Mammary epithelial cell (primary cell): ENCODE measurements at regions of chr15 and their contacts with region 1.

Region 1: DNA sequence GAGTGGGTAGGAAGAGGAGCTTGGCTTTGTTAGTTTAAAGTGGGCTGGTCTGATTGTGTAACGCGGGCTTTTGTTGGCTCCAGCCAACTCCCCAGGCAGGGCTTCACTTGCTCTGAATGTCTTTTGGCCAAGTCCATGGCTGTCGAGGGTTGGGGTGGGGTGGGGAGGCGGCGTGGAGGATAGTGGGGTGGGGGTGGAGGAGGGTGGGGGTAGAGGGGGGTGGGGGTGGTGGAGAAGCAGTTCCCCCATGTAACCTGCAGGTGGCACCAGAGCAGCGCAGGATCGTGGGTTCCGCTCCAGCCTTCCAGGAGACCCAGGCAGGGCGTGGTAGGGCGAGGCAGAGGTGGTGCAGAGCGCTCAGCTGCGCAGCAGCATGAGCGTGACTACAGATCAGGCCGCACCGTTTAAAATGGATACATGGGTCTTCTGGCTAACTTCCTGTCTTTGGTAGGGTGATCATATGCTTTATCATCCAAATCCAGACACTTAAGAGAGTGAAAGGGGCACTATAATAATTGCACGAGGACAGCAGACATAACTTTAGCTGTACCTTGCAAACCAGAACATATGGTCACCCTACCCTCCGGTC is 28.3 kb downstream of the GOLGA6A start:
- DNase-seq: peak; percentile 47
- H3K4me3 ChIP-seq: no peak overlapping the region
- H3K27ac ChIP-seq: no peak overlapping the region
- H3K4me1 ChIP-seq: peaks cover 24% of the 10 kb centered on the region
- H3K27me3 ChIP-seq: no peaks in the 10 kb centered on the region
- CTCF ChIP-seq: peak; percentile 36 to 77

Region 2: GRCh38 chr15:73991726-73992593 is 62.1 kb before region 1 on chr15 and contains the start of gene STOML1:
- CTCF ChIA-PET with region 1: no interaction called
- dilution Hi-C with region 1: no loop called
- in situ Hi-C with region 1: no loop called
- intact Hi-C with region 1: no loop called
- DNase-seq: peak; percentile 92
- H3K4me3 ChIP-seq: peak within 1 kb of the TSS; percentile 59 to 78 (median 68)
- H3K27ac ChIP-seq: peak within 1 kb of the TSS; percentile 35
- H3K4me1 ChIP-seq: peaks cover 61% of the 10 kb centered on the region
- H3K27me3 ChIP-seq: no peaks in the 10 kb centered on the region
- CTCF ChIP-seq: peak; percentile 64 to 80
- total RNA-seq, gene STOML1: 14.0 to 15.3 TPM

Region 3: DNA sequence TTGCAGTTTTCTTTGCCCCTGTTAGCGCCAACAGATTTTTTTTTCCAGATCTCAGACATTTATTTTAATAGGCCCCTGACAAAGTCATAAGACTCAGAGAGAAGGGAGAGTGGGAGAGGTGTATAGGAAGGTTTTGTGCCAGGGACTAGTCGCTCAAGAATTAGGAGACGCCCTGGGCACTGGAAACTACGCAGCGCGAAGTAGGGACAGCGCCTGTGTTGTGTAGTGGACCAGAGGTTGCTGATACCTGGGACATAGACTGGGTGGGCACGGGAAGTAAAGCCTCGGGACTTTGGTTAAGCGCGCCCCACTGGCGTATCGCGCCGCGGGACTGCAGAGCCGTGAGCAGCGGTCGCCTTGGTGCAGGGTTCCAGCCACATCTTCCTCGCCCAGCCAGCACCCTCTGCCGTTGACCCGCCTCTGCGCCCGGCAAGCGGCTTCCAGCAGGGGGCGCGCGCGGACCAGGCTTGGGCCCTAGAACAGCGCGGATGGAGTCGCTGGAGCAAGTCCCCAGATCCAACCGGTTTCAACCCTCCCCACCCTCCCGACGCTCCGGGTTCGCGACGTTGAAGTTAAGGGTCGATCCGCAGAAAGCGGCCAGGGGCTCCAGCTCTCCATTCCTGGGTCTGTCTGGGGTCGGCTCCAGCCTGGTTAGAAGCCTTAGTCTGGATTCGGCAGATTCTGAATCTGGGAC is 73.4 kb after region 1 on chr15:
- CTCF ChIA-PET with region 1: interaction called, 4 read pairs
- dilution Hi-C with region 1: no loop called
- in situ Hi-C with region 1: loop called in 1 of 2 experiments (anchors 10 kb)
- intact Hi-C with region 1: loop called (anchors 2 kb)
- DNase-seq: peak; percentile 76
- H3K4me3 ChIP-seq: peak overlapping the region in 1 of 3 experiments; percentile 41
- H3K27ac ChIP-seq: no peak overlapping the region
- H3K4me1 ChIP-seq: peaks cover 13% of the 10 kb centered on the region
- H3K27me3 ChIP-seq: peaks cover 41% of the 10 kb centered on the region
- CTCF ChIP-seq: peak; percentile 80 to 99

Region 4: GRCh38 chr15:74275957-74276356 is 221.9 kb after region 1 on chr15:
- CTCF ChIA-PET with region 1: no interaction called
- dilution Hi-C with region 1: no loop called
- in situ Hi-C with region 1: no loop called
- intact Hi-C with region 1: no loop called
- DNase-seq: no peak
- H3K4me3 ChIP-seq: no peak overlapping the region
- H3K27ac ChIP-seq: no peak overlapping the region
- H3K4me1 ChIP-seq: no peaks in the 10 kb centered on the region
- H3K27me3 ChIP-seq: peaks cover 1% of the 10 kb centered on the region
- CTCF ChIP-seq: no peak

Region 5: GRCh38 chr15:74302821-74303359 is 248.9 kb after region 1 on chr15:
- CTCF ChIA-PET with region 1: interaction called, 13 read pairs
- dilution Hi-C with region 1: no loop called
- in situ Hi-C with region 1: no loop called
- intact Hi-C with region 1: loop called (anchors 1 kb)
- DNase-seq: peak; percentile 15
- H3K4me3 ChIP-seq: no peak overlapping the region
- H3K27ac ChIP-seq: no peak overlapping the region
- H3K4me1 ChIP-seq: peaks cover 12% of the 10 kb centered on the region
- H3K27me3 ChIP-seq: no peaks in the 10 kb centered on the region
- CTCF ChIP-seq: peak; percentile 50 to 84